ENCODE measurements at regions of chr2 and their contacts with region 1.

Region 1: DNA sequence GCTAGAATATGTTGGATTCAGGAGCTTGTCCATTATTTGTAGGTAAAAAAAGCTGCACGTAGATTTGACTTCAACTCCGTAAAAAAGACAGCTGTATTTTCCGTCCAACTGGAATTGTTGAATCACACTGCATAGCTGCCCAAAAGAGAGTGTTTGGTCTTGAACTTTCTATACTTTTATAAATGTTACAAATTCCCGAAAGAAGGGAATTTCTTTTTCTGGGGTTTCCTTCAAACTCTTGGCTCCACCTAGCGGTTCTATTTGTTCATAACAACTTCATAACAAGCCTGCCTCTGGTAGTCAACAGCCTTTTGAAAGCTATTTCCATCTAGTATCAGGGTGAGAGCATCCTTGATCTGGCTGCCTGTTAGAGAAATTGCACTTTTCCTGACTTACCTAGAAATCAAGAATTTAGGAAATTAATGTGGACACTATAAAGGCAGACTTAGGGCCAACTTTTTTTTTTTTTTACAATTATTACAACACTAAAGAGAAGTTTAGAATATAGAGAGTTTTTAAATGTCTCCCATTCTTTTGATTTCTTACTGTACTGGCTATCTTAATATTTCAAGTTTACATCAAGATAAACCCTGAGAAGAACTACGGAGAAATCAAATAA is 48.1 kb downstream of the TMEM185B start:
- DNase-seq: peak; percentile 84
- ATAC-seq: peak; percentile 62
- H3K4me3 ChIP-seq: no peak overlapping the region
- H3K27ac ChIP-seq: no peak overlapping the region
- H3K4me1 ChIP-seq: no peaks in the 10 kb centered on the region
- H3K27me3 ChIP-seq: no peaks in the 10 kb centered on the region
- CTCF ChIP-seq: peak; percentile 85

Region 2: DNA sequence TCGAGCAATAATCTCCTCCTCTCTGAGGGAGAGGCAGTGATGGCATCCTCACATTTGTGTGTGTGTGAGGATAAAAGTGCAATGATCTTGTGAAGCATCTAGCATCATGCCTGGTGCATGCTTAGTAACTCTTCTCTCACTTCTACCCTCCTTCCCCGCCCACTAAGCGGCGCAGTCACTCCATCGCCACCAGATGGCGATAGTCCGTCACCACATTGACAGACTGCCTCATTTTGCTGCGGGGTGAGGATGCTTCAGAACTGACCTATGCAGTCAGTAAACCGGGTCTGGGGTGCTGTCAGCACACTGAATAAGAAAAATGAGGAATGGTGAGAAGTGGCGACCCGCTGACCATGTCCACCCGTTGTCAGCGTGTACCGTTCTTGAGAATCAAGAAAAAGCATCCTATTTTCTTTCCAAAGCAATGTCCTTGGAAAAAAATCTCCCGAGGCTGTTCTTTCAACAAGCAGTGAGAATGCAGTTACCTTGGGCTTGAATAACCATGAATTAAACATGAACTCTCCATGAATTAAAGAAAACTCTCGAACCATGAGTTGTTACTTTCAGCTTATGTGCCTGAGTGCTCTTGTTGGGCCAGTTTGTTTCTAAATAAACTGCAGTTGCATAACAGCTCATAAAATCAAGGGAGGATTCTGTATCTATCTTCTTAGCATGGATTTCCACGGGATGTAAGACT is 533.4 kb before region 1 on chr2:
- CTCF ChIA-PET with region 1: interaction called, 10 read pairs
- POLR2A ChIA-PET with region 1: no interaction called
- intact Hi-C with region 1: loop called (anchors 10 kb)
- DNase-seq: peak; percentile 86
- ATAC-seq: peak; percentile 98
- H3K4me3 ChIP-seq: no peak overlapping the region
- H3K27ac ChIP-seq: no peak overlapping the region
- H3K4me1 ChIP-seq: no peaks in the 10 kb centered on the region; the same call in 1 of the 2 replicates
- H3K27me3 ChIP-seq: peaks cover 25% of the 10 kb centered on the region
- CTCF ChIP-seq: peak; percentile 94

Region 3: DNA sequence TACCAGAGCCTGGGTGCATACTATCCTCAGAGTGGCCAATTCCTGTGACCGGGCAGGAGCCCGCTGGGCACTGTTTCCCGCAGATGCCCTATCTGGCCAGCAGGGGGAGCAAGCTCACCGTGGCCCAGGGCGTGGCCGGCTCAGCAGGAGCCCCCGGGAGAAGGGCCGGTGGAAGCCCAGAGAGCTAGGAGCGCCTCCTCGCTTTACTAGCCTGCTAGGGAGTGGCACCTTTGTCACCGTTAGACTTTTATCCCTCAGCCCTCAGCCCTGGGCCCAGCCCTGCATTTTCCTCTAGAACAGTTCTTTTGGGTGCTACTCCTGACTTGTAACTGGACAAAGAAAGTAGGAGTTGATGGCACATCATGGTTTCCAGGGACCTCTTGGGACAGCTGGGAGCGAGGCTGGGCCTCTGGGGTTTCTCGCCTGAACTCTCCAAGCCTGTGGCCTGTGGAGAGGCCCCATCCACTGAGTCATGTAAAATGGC is 472.1 kb before region 1 on chr2:
- CTCF ChIA-PET with region 1: interaction called, 4 read pairs
- POLR2A ChIA-PET with region 1: no interaction called
- intact Hi-C with region 1: loop called (anchors 1 kb)
- DNase-seq: peak; percentile 81
- ATAC-seq: peak; percentile 96
- H3K4me3 ChIP-seq: no peak overlapping the region
- H3K27ac ChIP-seq: no peak overlapping the region
- H3K4me1 ChIP-seq: peaks cover 4% of the 10 kb centered on the region; the same call in 1 of the 2 replicates
- H3K27me3 ChIP-seq: no peaks in the 10 kb centered on the region
- CTCF ChIP-seq: peak; percentile 97

Region 4: DNA sequence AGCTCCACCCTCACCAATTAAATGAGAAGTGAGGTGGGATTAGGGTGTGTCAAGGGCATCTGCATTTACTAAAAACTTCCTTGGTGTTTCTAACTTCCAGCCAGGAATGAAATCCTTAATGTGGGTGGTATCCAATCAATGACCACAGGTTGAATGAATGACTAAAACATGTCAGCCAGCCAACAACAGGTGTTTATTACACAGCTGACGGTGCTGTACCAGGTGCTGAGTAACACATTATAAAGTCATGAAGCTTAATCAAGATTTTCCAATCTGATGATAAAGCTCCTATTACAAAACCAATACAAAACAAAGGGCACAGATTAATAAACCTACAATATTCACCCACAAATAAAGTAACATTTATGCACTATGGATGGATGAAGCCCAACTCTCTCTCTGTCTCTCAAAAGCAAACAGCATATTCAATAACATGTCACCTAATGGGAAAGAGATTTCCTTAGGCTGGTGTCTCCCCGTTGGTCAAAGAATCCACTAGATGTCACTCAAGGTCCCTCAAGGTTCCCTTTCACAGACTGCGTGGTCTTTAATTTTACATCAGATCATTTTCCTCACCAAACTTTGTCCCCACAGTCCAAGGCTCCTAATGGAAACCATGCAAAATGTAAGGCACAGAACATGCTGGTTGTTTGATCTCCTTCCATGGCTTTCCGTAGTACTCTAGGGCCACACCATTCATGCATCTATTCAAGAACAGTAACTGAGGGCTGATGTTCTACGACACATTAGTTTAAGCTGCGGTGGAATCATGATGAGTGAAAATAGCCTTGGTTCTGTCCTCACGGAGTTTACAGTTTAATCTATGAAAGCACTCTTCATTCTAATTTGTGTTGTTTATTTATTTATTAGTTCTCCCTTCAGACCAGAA is 421.8 kb before region 1 on chr2:
- CTCF ChIA-PET with region 1: interaction called, 3 read pairs
- POLR2A ChIA-PET with region 1: no interaction called
- intact Hi-C with region 1: loop called (anchors 2 kb)
- DNase-seq: peak; percentile 68
- ATAC-seq: peak; percentile 58
- H3K4me3 ChIP-seq: no peak overlapping the region
- H3K27ac ChIP-seq: no peak overlapping the region
- H3K4me1 ChIP-seq: peaks cover 45% of the 10 kb centered on the region
- H3K27me3 ChIP-seq: no peaks in the 10 kb centered on the region
- CTCF ChIP-seq: peak; percentile 79

Region 5: DNA sequence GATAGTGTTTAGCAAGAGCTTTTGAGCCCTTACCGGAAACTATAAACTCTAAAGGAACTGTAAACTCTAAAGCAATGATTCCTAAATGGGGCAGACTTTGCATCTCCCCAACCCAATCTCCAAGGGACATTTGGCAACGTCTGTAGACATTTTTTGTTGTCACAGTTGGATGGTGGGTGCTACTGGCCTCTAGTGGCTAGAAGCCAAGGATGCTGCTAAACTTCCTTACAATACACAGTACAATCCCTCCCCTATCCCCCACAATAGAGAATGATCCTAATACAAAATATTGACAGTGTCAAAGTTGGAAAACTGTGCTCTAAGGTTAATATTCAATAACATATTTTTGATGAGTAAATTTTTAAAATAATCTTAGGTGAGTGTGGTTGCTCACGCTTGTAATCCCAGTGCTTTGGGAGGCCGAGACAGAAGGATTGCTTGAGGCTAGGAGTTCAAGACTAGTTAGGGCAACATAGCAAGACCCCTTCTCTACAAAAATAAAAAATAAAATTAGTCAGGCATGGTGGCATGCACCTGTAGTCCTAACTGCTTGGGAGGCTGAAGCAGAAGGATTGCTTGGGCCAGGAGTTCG is 348.6 kb before region 1 on chr2:
- CTCF ChIA-PET with region 1: interaction called, 3 read pairs
- POLR2A ChIA-PET with region 1: no interaction called
- intact Hi-C with region 1: loop called (anchors 10 kb)
- DNase-seq: peak; percentile 67
- ATAC-seq: peak; percentile 57
- H3K4me3 ChIP-seq: no peak overlapping the region
- H3K27ac ChIP-seq: no peak overlapping the region
- H3K4me1 ChIP-seq: peaks cover 30% of the 10 kb centered on the region
- H3K27me3 ChIP-seq: no peaks in the 10 kb centered on the region
- CTCF ChIP-seq: peak; percentile 88

Region 6: DNA sequence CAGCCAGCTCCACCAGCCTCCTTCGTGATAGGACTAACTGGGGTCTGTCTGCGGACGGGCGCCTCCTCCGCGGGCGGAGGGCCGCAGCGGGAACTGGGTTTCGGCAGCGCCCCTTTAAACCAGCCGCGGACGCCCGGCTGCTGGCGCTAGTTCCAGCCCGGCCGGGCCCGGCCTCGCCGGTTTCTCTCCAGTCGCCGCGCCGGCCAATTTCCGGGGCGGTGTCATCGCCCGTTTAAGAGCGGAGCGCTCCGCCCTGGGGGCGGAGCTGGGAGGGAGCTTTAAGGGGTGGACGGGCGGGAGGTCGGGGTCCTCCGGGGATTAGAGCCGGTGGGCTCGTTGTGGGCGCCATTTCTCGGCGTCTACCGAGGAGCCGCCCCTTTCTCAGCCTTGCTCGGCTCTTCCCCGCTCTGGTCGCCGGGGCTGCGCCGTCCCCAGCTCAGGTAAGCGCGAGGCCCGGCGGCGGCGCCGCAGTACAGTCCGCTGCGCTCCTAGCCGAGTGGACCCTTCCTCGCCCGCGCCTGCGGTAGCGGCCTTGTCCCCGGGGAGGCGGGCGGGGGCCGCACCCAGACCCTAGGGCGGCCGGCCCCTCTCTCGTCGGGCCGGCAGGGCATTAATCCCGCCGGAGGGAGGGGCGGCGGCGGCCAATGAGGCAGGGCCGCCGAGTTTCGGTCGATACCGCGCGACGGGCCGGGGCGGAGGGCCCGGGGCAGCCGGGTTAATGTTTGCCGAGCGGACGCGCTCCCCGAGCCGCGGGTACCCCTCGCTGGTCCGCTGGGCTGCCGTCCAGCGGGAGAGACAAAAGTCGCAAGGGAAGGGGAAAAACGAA is 162.1 kb before region 1 on chr2 and contains the start of gene EPB41L5:
- CTCF ChIA-PET with region 1: no interaction called
- POLR2A ChIA-PET with region 1: no interaction called
- intact Hi-C with region 1: loop called (anchors 1 kb)
- DNase-seq: peak; percentile 96
- ATAC-seq: peak; percentile 91
- H3K4me3 ChIP-seq: peak within 1 kb of the TSS; percentile 80
- H3K27ac ChIP-seq: peak within 1 kb of the TSS; percentile 48
- H3K4me1 ChIP-seq: peaks cover 17% of the 10 kb centered on the region
- H3K27me3 ChIP-seq: no peaks in the 10 kb centered on the region
- CTCF ChIP-seq: 0 out of 2 replicates have a peak, but pooled peaks have one; percentile 8
- total RNA-seq, gene EPB41L5: 11.7 and 14.0 TPM in 2 replicates

Region 7: GRCh38 chr2:120077896-120078295 is 97.2 kb before region 1 on chr2:
- CTCF ChIA-PET with region 1: no interaction called
- POLR2A ChIA-PET with region 1: no interaction called
- intact Hi-C with region 1: no loop called
- DNase-seq: no peak
- ATAC-seq: no peak
- H3K4me3 ChIP-seq: no peak overlapping the region
- H3K27ac ChIP-seq: no peak overlapping the region
- H3K4me1 ChIP-seq: no peaks in the 10 kb centered on the region
- H3K27me3 ChIP-seq: no peaks in the 10 kb centered on the region
- CTCF ChIP-seq: no peak

Region 8: GRCh38 chr2:120245354-120245791 is 70.3 kb after region 1 on chr2:
- CTCF ChIA-PET with region 1: no interaction called
- POLR2A ChIA-PET with region 1: no interaction called
- intact Hi-C with region 1: no loop called
- DNase-seq: peak; percentile 54
- ATAC-seq: peak; percentile 74
- H3K4me3 ChIP-seq: no peak overlapping the region
- H3K27ac ChIP-seq: no peak overlapping the region
- H3K4me1 ChIP-seq: peaks cover 26% of the 10 kb centered on the region
- H3K27me3 ChIP-seq: no peaks in the 10 kb centered on the region
- CTCF ChIP-seq: no peak

Region 9: GRCh38 chr2:120298173-120298835 is 123.2 kb after region 1 on chr2:
- CTCF ChIA-PET with region 1: no interaction called
- POLR2A ChIA-PET with region 1: no interaction called
- intact Hi-C with region 1: no loop called
- DNase-seq: no peak
- ATAC-seq: no peak
- H3K4me3 ChIP-seq: no peak overlapping the region
- H3K27ac ChIP-seq: no peak overlapping the region
- H3K4me1 ChIP-seq: no peaks in the 10 kb centered on the region
- H3K27me3 ChIP-seq: no peaks in the 10 kb centered on the region
- CTCF ChIP-seq: no peak

Region 10: GRCh38 chr2:120312861-120313694 is 138.0 kb after region 1 on chr2:
- CTCF ChIA-PET with region 1: interaction called, 14 read pairs
- POLR2A ChIA-PET with region 1: no interaction called
- intact Hi-C with region 1: loop called (anchors 1 kb)
- DNase-seq: peak; percentile 95
- ATAC-seq: peak; percentile 87
- H3K4me3 ChIP-seq: peak overlapping the region; percentile 64
- H3K27ac ChIP-seq: no peak overlapping the region
- H3K4me1 ChIP-seq: peaks cover 4% of the 10 kb centered on the region; the same call in 1 of the 2 replicates
- H3K27me3 ChIP-seq: no peaks in the 10 kb centered on the region
- CTCF ChIP-seq: peak; percentile 98

Measured in PC-3 (cell line).